ENCODE measurements at regions of chr10 and their contacts with region 1.

Region 1: GRCh38 chr10:113049881-113050280 is 99.8 kb downstream of the TCF7L2 start:
- DNase-seq: no peak
- ATAC-seq: no peak
- H3K4me3 ChIP-seq: no peak overlapping the region
- H3K4me3 Mint-ChIP-seq: no peak overlapping the region
- H3K27ac ChIP-seq: no peak overlapping the region
- H3K27ac Mint-ChIP-seq: no peak overlapping the region
- H3K4me1 ChIP-seq: peaks cover 18% of the 10 kb centered on the region
- H3K4me1 Mint-ChIP-seq: peaks cover 28% of the 10 kb centered on the region
- H3K27me3 ChIP-seq: no peaks in the 10 kb centered on the region
- H3K27me3 Mint-ChIP-seq: peaks cover 3% of the 10 kb centered on the region
- CTCF ChIP-seq: no peak

Region 2: GRCh38 chr10:113007032-113007771 is 42.7 kb before region 1 on chr10:
- CTCF ChIA-PET with region 1: no interaction called
- POLR2A ChIA-PET with region 1: no interaction called
- intact Hi-C with region 1: loop called in 1 of 2 experiments (anchors 1 kb)
- DNase-seq: peak; percentile 5 to 87 (median 36)
- ATAC-seq: peak; percentile 88
- H3K4me3 ChIP-seq: peak overlapping the region; percentile 23 to 34
- H3K4me3 Mint-ChIP-seq: peak overlapping the region; percentile 80
- H3K27ac ChIP-seq: no peak overlapping the region
- H3K27ac Mint-ChIP-seq: peak overlapping the region; percentile 42
- H3K4me1 ChIP-seq: peaks cover 32% of the 10 kb centered on the region
- H3K4me1 Mint-ChIP-seq: peaks cover 36% of the 10 kb centered on the region
- H3K27me3 ChIP-seq: peaks cover 0 to 2% of the 10 kb centered on the region in 2 experiments
- H3K27me3 Mint-ChIP-seq: peaks cover 34% of the 10 kb centered on the region
- CTCF ChIP-seq: no peak